ENCODE measurements at regions of chr16 and their contacts with region 1.

Region 1: DNA sequence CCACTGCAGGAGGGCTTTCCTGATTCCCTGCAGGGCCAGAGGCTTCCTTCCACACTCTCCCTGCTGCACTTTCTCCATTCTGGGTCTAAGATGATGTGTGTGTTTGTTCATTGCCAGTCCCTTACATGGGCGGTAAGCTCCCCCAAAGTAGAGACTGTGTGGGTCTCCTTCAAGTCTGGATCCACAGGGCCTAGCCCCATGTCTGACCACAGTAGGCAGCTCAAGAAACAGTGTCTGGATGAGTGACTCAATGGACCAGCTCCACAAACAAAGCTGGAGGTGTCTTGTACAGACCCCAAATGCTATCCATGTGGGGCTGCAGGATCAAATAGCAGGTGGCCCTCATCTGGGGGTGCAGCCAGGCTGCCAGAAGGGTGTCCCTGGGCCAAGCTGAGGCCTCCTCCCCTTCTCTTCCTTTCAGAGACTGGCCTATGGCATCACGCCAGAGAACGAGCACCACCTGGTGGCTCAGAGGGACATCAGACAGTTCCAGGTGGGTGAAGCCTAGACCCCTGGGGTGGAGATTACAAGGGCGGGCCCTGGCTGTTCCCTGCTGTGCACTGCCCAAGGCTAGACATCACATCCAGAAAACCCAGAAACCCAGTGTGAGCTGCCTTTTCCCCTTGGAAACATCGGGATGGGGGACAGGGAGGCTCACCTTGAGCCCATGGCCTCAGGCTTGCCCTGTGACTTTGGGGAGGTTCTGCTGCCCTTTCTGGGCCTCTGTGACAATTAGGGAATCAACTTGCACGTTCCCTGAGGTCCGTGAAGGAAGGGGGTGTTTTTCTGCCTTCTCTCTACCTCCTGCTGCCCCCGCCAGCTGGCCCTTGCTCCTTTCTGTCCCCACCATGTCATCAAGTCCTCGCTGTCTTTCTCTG is 45.9 kb downstream of the SLC6A2 start:
- DNase-seq: peak; percentile 32
- H3K4me3 ChIP-seq: no peak overlapping the region
- H3K27ac ChIP-seq: no peak overlapping the region
- H3K4me1 ChIP-seq: no peaks in the 10 kb centered on the region
- H3K27me3 ChIP-seq: peaks cover 5% of the 10 kb centered on the region
- CTCF ChIP-seq: peak in 3 of 4 experiments; percentile 57 to 75 (median 60)
- POLR2A ChIP-seq: no peak

Region 2: GRCh38 chr16:55543472-55543871 is 158.2 kb before region 1 on chr16:
- intact Hi-C with region 1: loop called (anchors 5 kb)
- DNase-seq: no peak
- H3K4me3 ChIP-seq: no peak overlapping the region
- H3K27ac ChIP-seq: no peak overlapping the region
- H3K4me1 ChIP-seq: no peaks in the 10 kb centered on the region
- H3K27me3 ChIP-seq: no peaks in the 10 kb centered on the region
- CTCF ChIP-seq: peak in 3 of 4 experiments; percentile 28 to 57 (median 43)
- POLR2A ChIP-seq: no peak

Region 3: DNA sequence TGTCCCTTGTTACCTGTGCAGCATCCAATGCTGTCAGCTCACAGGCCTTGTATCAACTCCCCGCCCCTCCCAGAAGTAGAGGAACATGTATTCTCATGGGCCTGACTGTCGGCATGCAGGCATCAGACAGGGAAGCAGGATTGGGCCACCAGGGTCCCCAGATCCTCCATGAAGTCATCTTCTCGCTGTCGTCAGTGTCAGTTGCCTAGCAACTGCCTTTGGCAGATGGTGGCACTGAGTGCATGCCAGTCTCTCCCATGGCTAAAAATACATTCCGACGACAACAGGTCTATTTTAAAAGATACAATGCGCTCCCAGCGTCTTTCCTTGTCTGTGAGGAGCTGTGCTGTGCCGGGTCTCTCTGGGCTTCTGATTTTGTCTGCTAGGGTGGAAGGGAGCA is 210.3 kb after region 1 on chr16:
- intact Hi-C with region 1: no loop called
- DNase-seq: no peak
- H3K4me3 ChIP-seq: no peak overlapping the region
- H3K27ac ChIP-seq: no peak overlapping the region
- H3K4me1 ChIP-seq: no peaks in the 10 kb centered on the region
- H3K27me3 ChIP-seq: no peaks in the 10 kb centered on the region
- CTCF ChIP-seq: no peak
- POLR2A ChIP-seq: no peak